Activated T-helper 1 cell treated with anti-CD3 and anti-CD28 coated beads, Interleukin-12 subunit alpha, Interleukin-12 subunit beta, Interleukin-2, Interleukin-4 antibody, amounts not matched to agents 30 ng/mL and 10 ng/mL and 1 ng/mL, durations not matched to agents 14 hours and 24 hours and 36 hours (primary cell): ENCODE measurements at regions of chr11 and their contacts with region 1.

Region 1: GRCh38 chr11:78188286-78189173 is at the starts of genes KCTD21 and USP35:
- DNase-seq: peak; percentile 93
- H3K4me3 Mint-ChIP-seq: peak within 1 kb of the TSS; percentile 99
- H3K27ac Mint-ChIP-seq: peak within 1 kb of the TSS; percentile 100
- H3K4me1 Mint-ChIP-seq: peaks cover 57% of the 10 kb centered on the region
- H3K27me3 Mint-ChIP-seq: no peaks in the 10 kb centered on the region
- total RNA-seq, gene KCTD21: 10.7 and 12.0 TPM in 2 replicates
- total RNA-seq, gene USP35: 11.8 and 14.0 TPM in 2 replicates

Region 2: DNA sequence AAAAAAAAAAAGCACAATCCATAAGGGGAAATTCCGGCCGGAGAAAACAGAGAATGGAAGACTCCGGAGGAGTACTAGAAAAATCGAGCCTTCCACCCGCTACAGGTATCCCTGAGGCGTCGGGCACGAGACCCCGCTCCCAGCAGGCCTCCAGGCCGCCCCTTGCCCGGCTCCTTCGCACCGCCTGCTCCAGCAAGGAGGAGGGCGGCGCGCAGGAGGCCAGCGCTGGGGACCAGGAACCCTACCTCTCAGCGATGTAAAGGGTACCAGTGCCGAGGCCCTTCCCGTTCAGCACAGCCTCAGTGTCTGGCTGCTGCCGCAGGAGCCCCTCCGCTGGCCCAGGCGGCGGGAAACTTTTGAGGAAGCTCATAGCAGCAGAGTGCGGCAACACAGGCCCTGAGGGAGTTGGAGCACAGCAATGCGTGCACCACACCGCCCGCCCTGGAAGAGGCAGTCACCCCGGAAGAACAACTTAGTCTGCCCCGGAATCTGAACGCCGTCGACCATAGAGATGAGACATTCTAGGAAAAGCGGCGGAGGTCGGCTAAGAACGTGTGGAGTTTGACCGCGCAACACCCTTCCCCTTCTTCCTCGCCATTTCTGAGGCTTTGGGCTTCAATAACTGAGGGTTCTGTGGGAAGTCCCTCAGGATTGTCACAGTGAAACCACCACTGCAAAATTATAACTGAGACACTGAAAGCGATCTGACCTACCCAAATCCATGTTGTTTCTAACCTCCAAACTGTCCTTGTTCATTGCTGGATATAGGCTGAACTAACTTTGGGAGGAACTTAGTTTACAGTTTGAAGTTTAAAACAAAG is 551.0 kb before region 1 on chr11 and contains the start of gene CLNS1A:
- intact Hi-C with region 1: loop called (anchors 1 kb)
- DNase-seq: peak; percentile 74
- H3K4me3 Mint-ChIP-seq: peak within 1 kb of the TSS; percentile 96
- H3K27ac Mint-ChIP-seq: peak within 1 kb of the TSS; percentile 95
- H3K4me1 Mint-ChIP-seq: peaks cover 29% of the 10 kb centered on the region
- H3K27me3 Mint-ChIP-seq: no peaks in the 10 kb centered on the region
- total RNA-seq, gene CLNS1A: 161 and 169 TPM in 2 replicates

Region 3: DNA sequence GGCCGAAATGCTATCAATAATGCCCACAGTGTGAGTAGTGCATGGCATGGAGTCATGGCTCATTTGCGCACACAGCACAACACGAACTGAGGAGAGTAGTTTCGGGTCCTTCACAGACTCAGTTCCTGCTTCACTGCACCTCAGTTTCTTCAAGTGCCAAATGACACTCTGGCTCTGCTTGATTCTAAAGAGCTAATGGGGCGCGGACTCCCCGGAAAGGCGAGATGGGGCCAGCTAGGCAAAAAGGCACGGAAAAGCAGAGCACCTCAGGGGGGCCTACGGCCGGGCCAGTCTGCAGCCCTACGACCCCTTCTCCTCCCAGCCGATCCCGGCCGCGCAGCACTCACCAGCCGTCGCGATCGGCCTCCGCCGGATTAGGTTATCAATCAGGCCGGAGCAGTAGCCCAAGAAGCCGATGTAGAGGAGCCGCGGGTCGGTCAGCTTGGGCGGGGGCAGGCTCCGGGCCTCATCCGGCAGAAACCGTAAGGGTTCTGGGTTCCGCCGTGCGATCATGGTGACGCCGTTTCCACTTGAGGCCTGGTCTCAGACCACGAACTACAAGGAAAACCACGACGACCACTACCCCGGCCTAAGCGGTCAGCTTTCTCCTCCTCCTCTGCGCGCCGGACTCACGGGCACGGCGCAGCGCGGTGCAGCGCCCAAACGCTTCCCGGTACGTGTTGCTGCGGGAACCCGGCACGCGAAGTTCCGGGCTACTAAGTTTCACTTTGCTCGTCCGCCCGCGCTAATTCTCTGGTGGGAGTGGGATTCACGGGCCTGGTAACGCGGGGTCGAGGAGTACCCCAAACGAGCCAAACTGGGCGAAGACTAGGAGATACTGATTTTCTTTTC is 109.1 kb before region 1 on chr11 and contains the start of gene NDUFC2:
- intact Hi-C with region 1: loop called (anchors 1 kb)
- DNase-seq: peak; percentile 62
- H3K4me3 Mint-ChIP-seq: peak within 1 kb of the TSS; percentile 95
- H3K27ac Mint-ChIP-seq: peak within 1 kb of the TSS; percentile 86
- H3K4me1 Mint-ChIP-seq: peaks cover 53% of the 10 kb centered on the region
- H3K27me3 Mint-ChIP-seq: no peaks in the 10 kb centered on the region
- total RNA-seq, gene NDUFC2: 208 and 220 TPM in 2 replicates

Region 4: GRCh38 chr11:78202733-78203167 is 14.2 kb after region 1 on chr11:
- intact Hi-C with region 1: loop called (anchors 1 kb)
- DNase-seq: peak; percentile 59
- H3K4me3 Mint-ChIP-seq: peak overlapping the region; percentile 80
- H3K27ac Mint-ChIP-seq: peak overlapping the region; percentile 96
- H3K4me1 Mint-ChIP-seq: peaks cover 39% of the 10 kb centered on the region
- H3K27me3 Mint-ChIP-seq: no peaks in the 10 kb centered on the region

Region 5: DNA sequence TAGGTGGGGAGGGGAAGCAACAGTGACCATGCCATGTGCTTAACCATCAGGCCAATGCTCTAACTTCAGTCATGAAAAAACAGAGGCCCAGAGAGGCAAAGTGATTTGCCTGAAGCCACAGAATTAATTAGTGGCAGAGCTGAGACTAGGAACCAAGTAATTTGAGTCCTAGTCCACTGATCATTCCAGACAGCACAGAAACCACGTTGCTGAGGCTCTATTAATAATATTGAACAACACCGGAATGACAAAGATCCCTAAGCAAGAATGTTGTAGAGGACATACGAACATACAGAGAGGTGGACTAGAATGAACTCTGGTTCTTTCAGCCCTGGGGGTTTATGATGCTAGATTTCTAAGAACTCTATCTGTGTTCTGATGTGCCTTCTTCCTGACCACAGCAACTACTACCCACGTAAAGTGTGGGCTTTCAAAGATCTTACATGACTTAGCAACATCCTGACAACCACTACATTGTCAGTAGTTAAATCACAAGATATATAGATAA is 136.8 kb after region 1 on chr11:
- intact Hi-C with region 1: loop called (anchors 1 kb)
- DNase-seq: peak; percentile 28
- H3K4me3 Mint-ChIP-seq: peak overlapping the region; percentile 56
- H3K27ac Mint-ChIP-seq: peak overlapping the region; percentile 86
- H3K4me1 Mint-ChIP-seq: peaks cover 78% of the 10 kb centered on the region
- H3K27me3 Mint-ChIP-seq: no peaks in the 10 kb centered on the region

Region 6: DNA sequence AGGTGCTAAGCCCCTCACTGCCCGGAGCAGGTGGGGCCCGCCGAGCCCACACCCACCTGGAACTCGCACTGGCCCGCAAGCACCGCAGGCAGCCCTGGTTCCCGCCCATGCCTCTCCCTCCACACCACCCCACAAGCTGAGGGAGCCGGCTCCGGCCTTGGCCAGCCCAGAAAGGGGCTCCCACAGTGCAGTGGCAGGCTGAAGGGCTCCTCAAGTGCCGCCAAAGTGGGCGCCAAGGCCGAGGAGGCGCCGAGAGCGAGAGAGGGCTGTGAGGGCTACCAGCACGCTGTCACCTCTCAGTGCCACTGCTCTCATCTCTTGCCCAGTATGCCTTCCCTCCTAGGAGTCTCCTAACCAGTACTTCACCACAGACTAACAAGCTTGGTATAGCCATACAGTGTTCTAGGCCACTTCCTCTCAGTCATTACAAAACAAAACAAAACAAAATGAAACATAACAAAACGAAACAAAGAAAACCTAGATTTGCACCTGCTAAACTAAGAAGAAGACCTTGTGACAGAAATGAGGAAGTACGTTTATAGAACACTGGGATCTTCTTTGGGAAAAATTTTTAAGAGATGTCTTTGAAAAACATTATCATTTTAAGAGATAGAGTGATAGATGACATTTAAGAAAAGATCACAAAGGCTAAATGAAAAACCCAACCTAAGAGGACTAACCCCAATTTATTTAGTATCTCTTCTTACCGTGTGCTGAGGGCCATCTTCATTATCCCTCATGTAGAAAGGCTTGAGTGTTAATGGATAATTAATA is 276.8 kb after region 1 on chr11:
- intact Hi-C with region 1: loop called (anchors 2 kb)
- DNase-seq: peak; percentile 59
- H3K4me3 Mint-ChIP-seq: peak overlapping the region; percentile 73
- H3K27ac Mint-ChIP-seq: peak overlapping the region; percentile 92
- H3K4me1 Mint-ChIP-seq: peaks cover 45% of the 10 kb centered on the region
- H3K27me3 Mint-ChIP-seq: no peaks in the 10 kb centered on the region

Region 7: GRCh38 chr11:78645226-78646202 is 457.0 kb after region 1 on chr11:
- intact Hi-C with region 1: loop called (anchors 2 kb)
- DNase-seq: peak; percentile 35
- H3K4me3 Mint-ChIP-seq: no peak overlapping the region
- H3K27ac Mint-ChIP-seq: peak overlapping the region; percentile 69
- H3K4me1 Mint-ChIP-seq: peaks cover 35% of the 10 kb centered on the region
- H3K27me3 Mint-ChIP-seq: no peaks in the 10 kb centered on the region